ENCODE measurements at regions of chr4 and their contacts with region 1.

Region 1: DNA sequence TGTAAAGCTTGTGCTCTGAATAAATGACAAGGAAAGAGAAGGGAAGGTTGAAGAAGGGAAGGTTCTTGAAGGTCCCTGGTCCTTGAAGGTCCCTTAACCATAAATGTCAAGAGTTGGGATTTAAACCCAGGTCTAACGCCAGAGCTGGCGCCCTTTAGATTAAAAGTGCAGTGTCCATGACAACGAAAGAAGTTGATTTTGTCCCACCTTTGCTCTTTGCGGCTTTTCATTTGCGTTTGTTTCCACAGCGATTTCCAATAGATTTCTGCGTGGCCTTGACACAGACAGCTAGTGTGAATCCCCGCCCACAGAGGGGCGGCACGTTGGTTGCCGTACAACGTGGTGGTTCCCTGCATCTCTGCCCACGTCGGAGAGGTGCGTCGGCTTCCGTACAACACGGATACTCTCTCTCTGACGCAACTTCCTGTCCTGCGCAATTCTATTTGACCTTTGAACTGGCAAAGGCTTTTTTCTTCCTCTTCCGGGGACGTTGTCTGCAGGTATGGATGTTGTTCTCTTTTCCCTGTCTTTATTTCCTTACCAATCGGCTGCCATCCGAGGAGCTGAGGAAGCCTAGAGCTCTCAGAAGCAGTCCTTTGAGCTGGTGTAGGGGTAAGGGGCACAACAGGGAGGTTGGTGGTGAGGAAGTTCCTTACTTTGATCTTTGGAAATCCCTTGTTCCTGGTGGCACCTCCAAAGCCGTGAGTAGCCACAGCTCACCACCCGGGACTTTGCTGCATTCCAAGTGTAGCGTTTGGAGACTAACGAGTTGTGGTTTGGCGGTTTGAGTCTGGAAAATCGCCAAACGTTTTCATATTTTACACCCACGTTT is at the start of gene RPL34:
- DNase-seq: peak; percentile 97 to 98
- ATAC-seq: peak; percentile 100
- H3K4me3 ChIP-seq: peak within 1 kb of the TSS; percentile 95 to 96
- H3K27ac ChIP-seq: peak within 1 kb of the TSS; percentile 60 to 69
- H3K4me1 ChIP-seq: peaks cover 0 to 3% of the 10 kb centered on the region in 2 donors
- H3K27me3 ChIP-seq: no peaks in the 10 kb centered on the region
- total RNA-seq, gene RPL34: 967 to 1,116 TPM

Region 2: GRCh38 chr4:108650212-108651013 is 30.1 kb after region 1 on chr4 and contains the start of gene OSTC:
- intact Hi-C with region 1: loop called in 1 of 2 experiments (anchors 2 kb)
- DNase-seq: peak; percentile 96 to 98
- ATAC-seq: peak; percentile 99
- H3K4me3 ChIP-seq: peak within 1 kb of the TSS; percentile 39 to 95
- H3K27ac ChIP-seq: peak within 1 kb of the TSS in 1 of 2 donors; percentile 65
- H3K4me1 ChIP-seq: no peaks in the 10 kb centered on the region
- H3K27me3 ChIP-seq: no peaks in the 10 kb centered on the region
- total RNA-seq, gene OSTC: 63.5 to 67.2 TPM

Region 3: GRCh38 chr4:108751321-108751720 is 131.0 kb after region 1 on chr4:
- intact Hi-C with region 1: no loop called
- DNase-seq: no peak
- ATAC-seq: no peak
- H3K4me3 ChIP-seq: no peak overlapping the region
- H3K27ac ChIP-seq: no peak overlapping the region
- H3K4me1 ChIP-seq: no peaks in the 10 kb centered on the region
- H3K27me3 ChIP-seq: no peaks in the 10 kb centered on the region

Region 4: GRCh38 chr4:109815151-109816081 is 1195.1 kb after region 1 on chr4 and contains the start of gene GAR1:
- intact Hi-C with region 1: loop called in 1 of 2 experiments (anchors 10 kb)
- DNase-seq: peak; percentile 92 to 94
- ATAC-seq: peak; percentile 98
- H3K4me3 ChIP-seq: peak within 1 kb of the TSS; percentile 51 to 57
- H3K27ac ChIP-seq: peak within 1 kb of the TSS in 1 of 2 donors; percentile 23
- H3K4me1 ChIP-seq: no peaks in the 10 kb centered on the region
- H3K27me3 ChIP-seq: no peaks in the 10 kb centered on the region
- total RNA-seq, gene GAR1: 9.8 to 11.3 TPM

Measured in aorta (tissue), 5 donors.